ENCODE measurements at regions of chr17 and their contacts with region 1.

Region 1: GRCh38 chr17:55527540-55528118 is 16.4 kb upstream of the SMIM36 start:
- DNase-seq: no peak
- CTCF ChIP-seq: peak; percentile 63

Region 2: GRCh38 chr17:55500103-55500502 is 27.5 kb before region 1 on chr17:
- CTCF ChIA-PET with region 1: no interaction called
- POLR2A ChIA-PET with region 1: no interaction called
- DNase-seq: no peak
- CTCF ChIP-seq: no peak

Region 3: DNA sequence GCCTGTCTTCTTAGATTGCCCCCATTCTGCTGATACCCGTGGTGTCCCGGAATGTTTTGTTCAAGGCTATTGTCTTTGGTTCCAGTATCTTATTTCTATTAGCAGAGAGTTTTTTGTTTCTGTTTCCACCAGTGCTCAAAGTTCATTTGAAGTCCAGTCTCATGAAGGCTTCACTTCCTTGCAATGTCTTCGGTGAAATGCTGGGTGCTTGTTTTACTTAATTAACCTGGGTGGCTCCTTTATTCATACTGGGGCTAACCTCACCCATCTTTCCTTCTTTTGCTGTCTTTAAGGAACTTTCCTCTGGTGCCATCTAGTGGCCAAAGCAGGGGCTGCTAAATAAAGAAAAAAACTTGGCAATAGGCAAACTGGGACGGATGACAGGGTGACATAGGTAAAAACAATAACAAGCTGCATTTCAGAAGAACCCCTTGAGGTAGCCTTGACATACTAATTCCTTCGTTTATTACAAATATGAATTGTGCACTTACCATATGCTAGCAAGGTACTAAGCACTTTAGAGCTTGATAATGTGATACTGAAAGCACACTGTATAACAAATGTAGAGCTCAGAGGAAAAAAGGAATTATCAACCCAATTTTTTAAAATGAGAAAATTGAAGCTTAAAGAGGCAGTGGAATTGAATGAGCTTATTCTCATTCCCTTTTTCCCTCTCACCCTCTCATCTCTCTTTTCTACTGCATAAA is 13.6 kb before region 1 on chr17:
- CTCF ChIA-PET with region 1: interaction called, 16 read pairs
- POLR2A ChIA-PET with region 1: no interaction called
- DNase-seq: peak; percentile 58
- CTCF ChIP-seq: peak; percentile 90

Region 4: GRCh38 chr17:55607731-55608341 is 80.2 kb after region 1 on chr17:
- CTCF ChIA-PET with region 1: interaction called, 119 read pairs
- POLR2A ChIA-PET with region 1: no interaction called
- DNase-seq: no peak
- CTCF ChIP-seq: no peak

Region 5: GRCh38 chr17:55717898-55718735 is 190.5 kb after region 1 on chr17:
- CTCF ChIA-PET with region 1: interaction called, 61 read pairs
- POLR2A ChIA-PET with region 1: no interaction called
- DNase-seq: peak; percentile 24
- CTCF ChIP-seq: peak; percentile 60

Region 6: GRCh38 chr17:55770148-55770870 is 242.7 kb after region 1 on chr17:
- CTCF ChIA-PET with region 1: interaction called, 17 read pairs
- POLR2A ChIA-PET with region 1: no interaction called
- DNase-seq: peak; percentile 45
- CTCF ChIP-seq: peak; percentile 26